HEK293T (cell line): ENCODE measurements at regions of chr9 and their contacts with region 1.

Region 1: GRCh38 chr9:134443168-134444037 is 117.1 kb downstream of the RXRA start:
- DNase-seq: peak; percentile 88

Region 2: GRCh38 chr9:134171316-134172197 is 271.8 kb before region 1 on chr9:
- CTCF ChIA-PET with region 1: interaction called, 11 read pairs
- POLR2A ChIA-PET with region 1: no interaction called
- DNase-seq: no peak